PC-9 (cell line): ENCODE measurements at regions of chr3 and their contacts with region 1.

Region 1: DNA sequence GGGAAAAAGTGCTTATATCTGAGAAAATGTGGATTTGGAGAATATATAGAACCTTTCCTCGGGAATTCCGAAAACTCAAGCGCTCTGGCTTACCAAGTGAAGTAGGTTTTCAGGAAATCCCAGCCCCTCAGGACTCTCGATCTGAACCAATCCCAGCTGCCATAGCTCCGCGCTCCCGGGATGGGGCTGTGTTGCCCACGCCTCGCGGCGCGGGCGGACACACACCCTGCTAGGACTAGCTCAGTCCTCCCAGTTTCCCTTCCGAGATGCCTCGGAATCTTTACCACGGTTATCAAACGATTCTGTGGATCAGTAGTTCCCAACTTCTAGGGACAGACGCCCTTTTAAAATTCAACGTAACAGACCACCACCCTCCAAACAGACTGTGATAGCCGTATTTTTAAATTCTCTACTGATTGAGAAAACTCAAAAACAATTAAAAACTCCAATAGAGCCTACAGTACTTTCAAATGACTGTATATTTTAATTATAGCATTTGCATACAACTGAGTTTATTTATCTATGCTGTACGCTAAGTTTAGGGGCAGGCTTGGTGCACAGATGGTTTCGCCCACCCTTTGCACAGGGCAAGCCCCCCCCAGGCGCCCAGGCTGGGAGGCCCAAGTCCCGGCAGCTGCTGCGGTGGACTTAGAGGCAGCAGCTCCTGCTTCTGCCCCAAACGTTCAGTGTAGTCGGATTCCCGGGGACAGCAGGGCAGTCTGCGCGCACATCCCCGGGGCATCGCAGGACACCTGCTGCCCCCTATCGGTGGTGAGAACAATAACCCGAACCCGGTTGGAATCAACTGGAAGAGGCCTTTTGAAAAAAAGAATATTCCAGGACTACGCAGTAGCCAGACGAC is 52.3 kb downstream of the CCDC54 start:
- DNase-seq: peak; percentile 64 to 86
- H3K4me3 ChIP-seq: peak overlapping the region; percentile 38; the same call in 1 of the 2 replicates
- H3K27ac ChIP-seq: no peak overlapping the region
- H3K4me1 ChIP-seq: peaks cover 9% of the 10 kb centered on the region
- H3K27me3 ChIP-seq: no peaks in the 10 kb centered on the region
- CTCF ChIP-seq: peak; percentile 94

Region 2: DNA sequence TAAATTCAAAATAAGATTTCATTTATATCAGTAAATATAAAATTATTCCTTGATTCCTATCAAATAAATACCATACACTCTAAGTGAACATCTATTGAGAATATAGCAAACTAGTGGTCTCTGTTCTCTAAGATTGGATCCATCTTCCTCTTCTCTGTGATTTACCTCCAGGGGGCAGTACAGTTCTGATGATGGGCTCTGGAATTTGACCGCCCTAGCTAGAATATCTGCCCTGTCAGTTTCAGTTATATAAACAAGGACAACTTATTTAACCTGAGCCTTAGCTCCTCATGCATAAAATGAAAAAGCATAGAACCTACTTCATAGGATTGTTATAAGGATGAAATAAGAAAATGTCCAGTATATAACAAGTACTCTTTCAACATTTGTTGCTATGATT is 223.4 kb before region 1 on chr3:
- CTCF ChIA-PET with region 1: interaction called, 3 read pairs
- POLR2A ChIA-PET with region 1: no interaction called
- intact Hi-C with region 1: loop called (anchors 2 kb)
- DNase-seq: peak; percentile 26 to 57
- H3K4me3 ChIP-seq: no peak overlapping the region
- H3K27ac ChIP-seq: no peak overlapping the region
- H3K4me1 ChIP-seq: peaks cover 32% of the 10 kb centered on the region
- H3K27me3 ChIP-seq: no peaks in the 10 kb centered on the region
- CTCF ChIP-seq: peak; percentile 90

Region 3: GRCh38 chr3:107522510-107523288 is 93.1 kb after region 1 on chr3 and contains the start of gene BBX:
- CTCF ChIA-PET with region 1: interaction called, 3 read pairs
- POLR2A ChIA-PET with region 1: no interaction called
- intact Hi-C with region 1: loop called (anchors 1 kb)
- DNase-seq: peak; percentile 94 to 98
- H3K4me3 ChIP-seq: peak within 1 kb of the TSS; percentile 95
- H3K27ac ChIP-seq: peak within 1 kb of the TSS; percentile 58
- H3K4me1 ChIP-seq: peaks cover 23% of the 10 kb centered on the region
- H3K27me3 ChIP-seq: no peaks in the 10 kb centered on the region
- CTCF ChIP-seq: no peak
- total RNA-seq, gene BBX: 91.7 and 92.5 TPM in 2 replicates

Region 4: DNA sequence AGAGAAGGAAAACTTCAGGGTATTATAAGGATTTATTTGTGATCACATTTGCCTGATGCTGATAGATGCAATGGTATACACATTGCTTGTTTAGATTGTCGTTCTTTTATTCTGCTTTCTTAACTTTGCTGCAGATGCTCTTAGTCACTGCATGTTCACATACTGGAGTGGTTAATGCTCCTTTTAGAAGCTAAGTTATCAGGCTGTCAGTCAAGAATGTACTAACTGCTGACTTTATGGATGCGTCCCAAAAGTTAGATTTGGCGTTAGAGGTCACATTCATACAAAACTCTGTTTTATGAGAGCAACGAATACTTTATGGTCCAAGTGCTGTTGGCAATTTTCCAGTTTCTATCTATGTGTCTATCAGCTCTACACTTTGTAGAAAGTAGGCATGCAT is 253.9 kb after region 1 on chr3:
- CTCF ChIA-PET with region 1: interaction called, 11 read pairs
- POLR2A ChIA-PET with region 1: no interaction called
- intact Hi-C with region 1: no loop called
- DNase-seq: no peak
- H3K4me3 ChIP-seq: no peak overlapping the region
- H3K27ac ChIP-seq: no peak overlapping the region
- H3K4me1 ChIP-seq: no peaks in the 10 kb centered on the region
- H3K27me3 ChIP-seq: no peaks in the 10 kb centered on the region
- CTCF ChIP-seq: no peak

Region 5: GRCh38 chr3:107969994-107970819 is 540.7 kb after region 1 on chr3:
- CTCF ChIA-PET with region 1: no interaction called
- POLR2A ChIA-PET with region 1: no interaction called
- intact Hi-C with region 1: no loop called
- DNase-seq: peak; percentile 22 to 61
- H3K4me3 ChIP-seq: no peak overlapping the region
- H3K27ac ChIP-seq: no peak overlapping the region
- H3K4me1 ChIP-seq: peaks cover 10% of the 10 kb centered on the region
- H3K27me3 ChIP-seq: no peaks in the 10 kb centered on the region
- CTCF ChIP-seq: no peak

Region 6: GRCh38 chr3:108914774-108915641 is 1485.5 kb after region 1 on chr3:
- CTCF ChIA-PET with region 1: interaction called, 14 read pairs
- POLR2A ChIA-PET with region 1: no interaction called
- intact Hi-C with region 1: no loop called
- DNase-seq: peak; percentile 54 to 61
- H3K4me3 ChIP-seq: no peak overlapping the region
- H3K27ac ChIP-seq: no peak overlapping the region
- H3K4me1 ChIP-seq: peaks cover 6% of the 10 kb centered on the region; the same call in 1 of the 2 replicates
- H3K27me3 ChIP-seq: no peaks in the 10 kb centered on the region
- CTCF ChIP-seq: peak; percentile 99